GM10248 (cell line): ENCODE measurements at regions of chr6 and their contacts with region 1.

Region 1: GRCh38 chr6:166612471-166612881 is 14.6 kb downstream of the RPS6KA2 start:
- DNase-seq: no peak
- CTCF ChIP-seq: no peak

Region 2: DNA sequence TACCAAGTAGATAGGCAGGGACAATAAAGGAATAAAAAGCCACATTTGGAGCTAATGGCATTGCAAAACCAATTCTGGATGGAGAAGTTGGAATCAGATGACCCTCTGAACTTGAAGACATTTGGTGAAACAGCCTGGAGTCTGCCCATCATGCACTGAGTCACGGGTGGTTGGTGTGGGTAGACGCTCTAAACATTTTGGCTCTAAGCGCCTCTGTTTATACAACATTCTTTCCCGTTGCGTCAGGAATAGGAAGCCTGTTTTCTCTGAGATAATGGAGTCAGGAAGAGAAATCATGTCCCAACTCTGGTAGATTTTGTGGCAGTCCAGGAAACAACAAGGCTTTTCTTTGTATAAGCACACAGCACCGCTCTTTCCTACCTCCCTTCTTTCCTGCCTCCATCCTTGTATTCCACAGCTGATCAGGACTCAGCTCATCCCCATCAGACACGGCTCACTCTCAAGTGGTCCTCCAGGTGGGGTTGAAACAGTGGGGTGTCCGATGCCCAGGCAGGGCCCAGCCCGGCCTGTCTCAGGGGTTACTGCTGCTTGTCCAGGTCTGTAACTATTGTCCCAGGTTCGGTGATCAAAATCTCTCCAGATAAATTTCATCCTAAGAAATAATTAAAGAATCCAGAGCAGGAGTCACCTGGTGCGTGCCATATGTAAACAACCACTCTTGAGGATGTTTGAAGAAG is 13.9 kb before region 1 on chr6:
- CTCF ChIA-PET with region 1: interaction called, 11 read pairs
- POLR2A ChIA-PET with region 1: no interaction called
- DNase-seq: no peak
- CTCF ChIP-seq: no peak